ENCODE measurements at regions of chr1 and their contacts with region 1.

Region 1: GRCh38 chr1:101122452-101123166 is 97.0 kb upstream of the DPH5 start:
- DNase-seq: peak in 1 of 2 donors; percentile 71
- ATAC-seq: peak; percentile 66 to 98 (median 77)
- H3K4me3 ChIP-seq: no peak overlapping the region
- H3K4me3 Mint-ChIP-seq: peak overlapping the region; percentile 56
- H3K27ac ChIP-seq: no peak overlapping the region
- H3K27ac Mint-ChIP-seq: peak overlapping the region; percentile 10 to 75
- H3K4me1 ChIP-seq: peaks cover 12% of the 10 kb centered on the region
- H3K4me1 Mint-ChIP-seq: peaks cover 23 to 34% of the 10 kb centered on the region in 2 donors
- H3K27me3 ChIP-seq: no peaks in the 10 kb centered on the region
- H3K27me3 Mint-ChIP-seq: peaks cover 16 to 18% of the 10 kb centered on the region in 2 donors
- CTCF ChIP-seq: no peak

Region 2: GRCh38 chr1:100552031-100552430 is 570.6 kb before region 1 on chr1:
- intact Hi-C with region 1: no loop called
- DNase-seq: no peak
- ATAC-seq: no peak
- H3K4me3 ChIP-seq: no peak overlapping the region
- H3K4me3 Mint-ChIP-seq: no peak overlapping the region
- H3K27ac ChIP-seq: no peak overlapping the region
- H3K27ac Mint-ChIP-seq: no peak overlapping the region
- H3K4me1 ChIP-seq: no peaks in the 10 kb centered on the region
- H3K4me1 Mint-ChIP-seq: no peaks in the 10 kb centered on the region
- H3K27me3 ChIP-seq: no peaks in the 10 kb centered on the region
- H3K27me3 Mint-ChIP-seq: peaks cover 14 to 59% of the 10 kb centered on the region in 2 donors
- CTCF ChIP-seq: no peak

Region 3: GRCh38 chr1:100928128-100928527 is 194.5 kb before region 1 on chr1:
- intact Hi-C with region 1: loop called (anchors 2 kb)
- DNase-seq: peak in 1 of 2 donors; percentile 63
- ATAC-seq: peak; percentile 45 to 56 (median 55)
- H3K4me3 ChIP-seq: no peak overlapping the region
- H3K4me3 Mint-ChIP-seq: no peak overlapping the region
- H3K27ac ChIP-seq: peak overlapping the region; percentile 72
- H3K27ac Mint-ChIP-seq: no peak overlapping the region
- H3K4me1 ChIP-seq: peaks cover 21% of the 10 kb centered on the region
- H3K4me1 Mint-ChIP-seq: peaks cover 30 to 40% of the 10 kb centered on the region in 2 donors
- H3K27me3 ChIP-seq: no peaks in the 10 kb centered on the region
- H3K27me3 Mint-ChIP-seq: no peaks in the 10 kb centered on the region
- CTCF ChIP-seq: no peak

Region 4: GRCh38 chr1:101112051-101112780 is 10.4 kb before region 1 on chr1:
- intact Hi-C with region 1: loop called (anchors 1 kb)
- DNase-seq: peak; percentile 46 to 93
- ATAC-seq: peak; percentile 93 to 96 (median 96)
- H3K4me3 ChIP-seq: no peak overlapping the region
- H3K4me3 Mint-ChIP-seq: peak overlapping the region; percentile 68
- H3K27ac ChIP-seq: peak overlapping the region; percentile 88
- H3K27ac Mint-ChIP-seq: peak overlapping the region; percentile 81 to 90
- H3K4me1 ChIP-seq: peaks cover 15% of the 10 kb centered on the region
- H3K4me1 Mint-ChIP-seq: peaks cover 34 to 43% of the 10 kb centered on the region in 2 donors
- H3K27me3 ChIP-seq: no peaks in the 10 kb centered on the region
- H3K27me3 Mint-ChIP-seq: no peaks in the 10 kb centered on the region
- CTCF ChIP-seq: no peak

Region 5: DNA sequence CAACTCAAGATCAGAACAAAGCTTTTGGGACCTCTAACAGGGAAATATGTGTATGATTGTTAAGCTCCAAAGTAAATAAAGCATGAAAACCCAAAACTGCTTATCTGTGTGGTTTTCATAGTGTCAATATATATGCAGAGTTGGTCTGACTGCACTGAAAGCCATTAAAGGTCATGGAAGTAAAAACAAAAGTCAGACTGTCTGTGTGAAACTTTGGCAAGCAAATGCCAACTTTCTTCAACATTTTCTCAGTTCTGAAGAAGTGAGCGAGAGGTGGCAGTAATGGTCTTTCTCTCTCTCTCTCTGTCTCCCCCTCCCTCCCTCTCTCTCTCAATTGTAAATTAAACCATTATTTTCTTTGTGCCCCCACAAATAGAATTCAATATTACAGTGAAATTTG is 14.1 kb after region 1 on chr1:
- intact Hi-C with region 1: loop called (anchors 2 kb)
- DNase-seq: peak in 1 of 2 donors; percentile 74
- ATAC-seq: peak; percentile 63 to 70 (median 66)
- H3K4me3 ChIP-seq: no peak overlapping the region
- H3K4me3 Mint-ChIP-seq: peak overlapping the region; percentile 80
- H3K27ac ChIP-seq: peak overlapping the region; percentile 69
- H3K27ac Mint-ChIP-seq: peak overlapping the region; percentile 88 to 93
- H3K4me1 ChIP-seq: peaks cover 6% of the 10 kb centered on the region
- H3K4me1 Mint-ChIP-seq: peaks cover 38 to 50% of the 10 kb centered on the region in 2 donors
- H3K27me3 ChIP-seq: no peaks in the 10 kb centered on the region
- H3K27me3 Mint-ChIP-seq: no peaks in the 10 kb centered on the region
- CTCF ChIP-seq: no peak